OCI-LY7 (cell line): ENCODE measurements at regions of chr11 and their contacts with region 1.

Region 1: GRCh38 chr11:108008656-108009496 is at the start of gene CUL5:
- DNase-seq: peak; percentile 93
- H3K4me3 ChIP-seq: peak within 1 kb of the TSS; percentile 98
- H3K27ac ChIP-seq: peak within 1 kb of the TSS; percentile 80
- H3K4me1 ChIP-seq: peaks cover 26% of the 10 kb centered on the region
- CTCF ChIP-seq: peak; percentile 86
- total RNA-seq, gene CUL5: 18.8 and 20.1 TPM in 2 replicates

Region 2: DNA sequence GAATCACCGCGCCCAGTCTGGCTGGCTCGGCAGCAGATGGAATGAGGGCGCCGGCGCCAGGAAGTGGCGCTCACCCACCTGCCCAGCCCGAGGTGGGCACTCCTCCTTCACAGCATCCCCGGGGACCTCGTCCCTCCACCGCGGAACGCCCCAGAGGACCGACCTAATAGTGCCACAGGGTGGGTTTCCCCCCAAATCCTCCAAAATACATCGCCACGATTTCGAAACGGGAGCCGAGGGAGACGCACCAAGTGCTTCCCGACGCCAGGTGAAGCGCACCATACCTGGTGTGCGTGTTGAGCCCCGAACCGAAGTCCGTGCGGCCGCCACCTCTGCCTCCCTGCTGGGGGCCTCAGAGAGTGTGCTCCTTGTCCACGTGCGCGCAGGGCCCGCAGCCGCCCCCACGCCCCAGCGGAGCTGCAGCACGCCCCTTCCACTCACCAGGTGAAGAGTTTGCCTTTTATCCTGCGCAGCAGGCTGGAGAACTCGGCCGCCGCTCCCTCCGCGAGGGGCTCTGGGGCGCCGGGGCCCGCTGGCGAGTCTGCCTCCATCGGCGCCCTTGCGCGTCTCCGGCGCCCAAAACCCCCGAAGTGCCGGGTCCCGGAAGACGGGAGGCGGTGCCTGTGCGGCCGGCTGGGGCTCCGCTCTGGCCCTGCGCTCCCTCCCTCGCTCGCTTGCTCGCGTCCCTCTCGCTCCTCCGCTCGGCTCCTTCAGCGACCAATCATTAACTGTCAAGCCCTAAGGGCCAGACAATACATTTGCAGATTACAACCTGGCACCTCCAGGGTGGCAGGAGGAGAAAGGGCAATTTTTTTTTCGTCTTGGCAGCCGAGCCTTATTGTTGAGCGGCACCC is 150.4 kb before region 1 on chr11 and contains the start of gene SLC35F2:
- CTCF ChIA-PET with region 1: no interaction called
- POLR2A ChIA-PET with region 1: no interaction called
- intact Hi-C with region 1: loop called (anchors 10 kb)
- DNase-seq: peak; percentile 91
- H3K4me3 ChIP-seq: peak within 1 kb of the TSS; percentile 85
- H3K27ac ChIP-seq: peak within 1 kb of the TSS; percentile 62
- H3K4me1 ChIP-seq: peaks cover 18% of the 10 kb centered on the region
- CTCF ChIP-seq: peak; percentile 54
- total RNA-seq, gene SLC35F2: 20.9 and 23.3 TPM in 2 replicates

Region 3: DNA sequence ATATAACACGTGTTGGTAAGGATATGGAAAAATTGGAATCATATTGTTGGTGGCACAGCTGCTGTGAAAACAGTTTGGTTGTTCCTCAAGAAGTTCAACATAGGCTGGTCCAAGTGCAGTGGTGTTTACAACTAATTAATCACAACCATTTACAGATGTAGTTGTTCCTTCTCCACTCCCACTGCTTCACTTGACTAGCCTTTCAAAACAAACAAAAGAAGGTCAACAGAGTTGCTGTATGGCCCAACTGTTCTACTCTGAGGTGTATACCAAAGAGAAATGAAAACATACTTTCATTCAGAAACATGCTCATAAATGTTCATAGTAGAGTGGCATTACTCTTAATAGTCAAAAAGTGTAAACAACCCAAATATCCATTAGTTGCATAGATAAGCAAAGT is 75.9 kb after region 1 on chr11:
- CTCF ChIA-PET with region 1: no interaction called
- POLR2A ChIA-PET with region 1: interaction called, 3 read pairs
- intact Hi-C with region 1: loop called (anchors 5 kb)
- DNase-seq: no peak
- H3K4me3 ChIP-seq: no peak overlapping the region
- H3K27ac ChIP-seq: no peak overlapping the region
- H3K4me1 ChIP-seq: no peaks in the 10 kb centered on the region
- CTCF ChIP-seq: no peak

Region 4: DNA sequence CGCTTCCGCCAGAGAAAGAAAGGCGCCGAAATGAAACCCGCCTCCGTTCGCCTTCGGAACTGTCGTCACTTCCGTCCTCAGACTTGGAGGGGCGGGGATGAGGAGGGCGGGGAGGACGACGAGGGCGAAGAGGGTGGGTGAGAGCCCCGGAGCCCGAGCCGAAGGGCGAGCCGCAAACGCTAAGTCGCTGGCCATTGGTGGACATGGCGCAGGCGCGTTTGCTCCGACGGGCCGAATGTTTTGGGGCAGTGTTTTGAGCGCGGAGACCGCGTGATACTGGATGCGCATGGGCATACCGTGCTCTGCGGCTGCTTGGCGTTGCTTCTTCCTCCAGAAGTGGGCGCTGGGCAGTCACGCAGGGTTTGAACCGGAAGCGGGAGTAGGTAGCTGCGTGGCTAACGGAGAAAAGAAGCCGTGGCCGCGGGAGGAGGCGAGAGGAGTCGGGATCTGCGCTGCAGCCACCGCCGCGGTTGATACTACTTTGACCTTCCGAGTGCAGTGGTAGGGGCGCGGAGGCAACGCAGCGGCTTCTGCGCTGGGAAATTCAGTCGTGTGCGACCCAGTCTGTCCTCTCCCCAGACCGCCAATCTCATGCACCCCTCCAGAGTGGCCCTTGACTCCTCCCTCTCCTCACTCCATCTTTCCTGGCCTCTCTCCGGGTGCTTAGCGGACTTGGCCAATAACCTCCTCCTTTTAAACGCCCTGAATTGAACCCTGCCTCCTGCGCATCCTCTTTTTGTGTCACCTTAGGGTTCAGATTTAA is 214.0 kb after region 1 on chr11 and contains the start of gene ATM:
- CTCF ChIA-PET with region 1: no interaction called
- POLR2A ChIA-PET with region 1: no interaction called
- intact Hi-C with region 1: loop called (anchors 5 kb)
- DNase-seq: peak; percentile 98
- H3K4me3 ChIP-seq: peak within 1 kb of the TSS; percentile 93
- H3K27ac ChIP-seq: peak within 1 kb of the TSS; percentile 90
- H3K4me1 ChIP-seq: peaks cover 40% of the 10 kb centered on the region
- CTCF ChIP-seq: peak; percentile 79
- total RNA-seq, gene ATM: 125 and 147 TPM in 2 replicates

Region 5: DNA sequence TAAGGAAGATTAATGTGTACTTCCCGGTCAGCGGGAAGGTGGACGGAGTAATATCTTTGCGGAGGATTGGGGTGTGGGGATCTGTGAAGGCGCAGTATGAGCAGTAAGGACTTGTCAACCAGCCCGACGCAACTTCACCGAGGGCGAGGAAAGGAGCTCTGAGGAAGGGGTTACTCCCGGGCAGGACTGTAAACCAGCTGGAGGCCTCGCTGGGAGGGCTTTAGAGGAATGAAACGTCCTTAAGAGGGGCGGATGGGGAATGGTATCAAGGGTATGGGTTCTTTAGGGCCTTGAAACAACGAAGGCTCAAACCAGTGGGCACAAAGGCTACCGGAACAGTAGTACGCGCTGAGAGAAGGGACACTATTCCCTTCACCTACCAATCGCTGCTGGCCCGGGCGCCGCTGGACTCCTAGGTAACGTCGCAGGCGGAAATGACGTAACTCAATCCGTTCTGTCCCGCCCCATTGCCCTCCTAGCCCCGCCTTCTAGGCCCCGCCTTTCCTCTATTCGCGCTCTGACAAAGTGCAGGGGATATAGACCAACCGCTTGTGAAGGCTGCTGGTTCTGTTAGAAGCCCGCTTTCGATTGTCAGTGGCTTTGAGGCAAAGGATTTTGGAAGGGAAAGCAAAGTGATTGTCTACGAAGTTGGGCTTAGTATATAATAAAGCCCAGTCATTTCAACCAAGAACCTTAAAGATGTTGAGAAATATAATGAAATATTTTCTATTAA is 458.4 kb after region 1 on chr11 and contains the start of gene C11orf65:
- CTCF ChIA-PET with region 1: no interaction called
- POLR2A ChIA-PET with region 1: no interaction called
- intact Hi-C with region 1: loop called (anchors 10 kb)
- DNase-seq: peak; percentile 95
- H3K4me3 ChIP-seq: peak within 1 kb of the TSS; percentile 89
- H3K27ac ChIP-seq: peak within 1 kb of the TSS; percentile 35
- H3K4me1 ChIP-seq: peaks cover 11% of the 10 kb centered on the region
- CTCF ChIP-seq: no peak
- total RNA-seq, gene C11orf65: 0.15 and 0.98 TPM in 2 replicates

Region 6: DNA sequence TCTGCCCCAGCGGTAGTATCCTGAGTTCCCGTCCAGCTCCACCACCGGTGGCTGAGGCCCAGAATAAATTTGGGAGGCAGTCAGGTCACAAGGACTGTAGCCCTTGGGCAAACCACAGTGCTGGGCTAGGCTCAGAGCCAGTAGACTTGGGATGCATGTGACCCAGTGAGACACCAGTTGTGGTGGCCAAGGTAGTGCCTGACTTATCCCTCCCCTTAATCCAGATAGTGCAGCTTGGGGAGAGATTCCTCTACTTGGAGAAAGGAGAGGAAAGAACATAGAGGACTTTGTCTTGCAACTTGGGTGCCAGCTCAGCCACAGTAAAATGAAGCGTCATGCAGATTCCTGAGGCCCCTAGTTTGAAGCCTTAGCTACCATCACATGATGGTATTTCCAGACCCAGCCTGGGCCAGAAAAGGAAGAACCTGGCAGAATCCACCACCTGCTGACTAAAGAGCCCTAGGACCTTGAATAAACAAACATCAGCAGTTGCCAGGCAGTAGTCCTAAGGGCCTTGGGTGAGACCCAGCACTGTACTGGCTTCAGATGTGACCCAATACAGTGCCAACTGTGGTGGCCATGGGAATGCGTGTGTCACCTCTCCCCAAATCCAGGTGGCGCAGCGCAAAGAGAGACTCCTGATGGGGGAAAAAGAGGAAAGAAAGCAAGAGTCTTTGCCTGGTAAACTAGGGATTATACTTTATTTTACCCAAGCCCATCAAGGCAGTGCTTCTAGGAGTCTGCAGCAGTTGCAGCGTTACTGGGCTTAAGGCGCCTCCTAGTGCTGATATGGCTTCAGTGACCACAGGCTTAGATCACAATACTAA is 639.0 kb after region 1 on chr11:
- CTCF ChIA-PET with region 1: no interaction called
- POLR2A ChIA-PET with region 1: no interaction called
- intact Hi-C with region 1: loop called (anchors 5 kb)
- DNase-seq: peak; percentile 67
- H3K4me3 ChIP-seq: no peak overlapping the region
- H3K27ac ChIP-seq: no peak overlapping the region
- H3K4me1 ChIP-seq: no peaks in the 10 kb centered on the region
- CTCF ChIP-seq: peak; percentile 84

Region 7: GRCh38 chr11:108664730-108665525 is 656.1 kb after region 1 on chr11 and contains the start of gene DDX10:
- CTCF ChIA-PET with region 1: no interaction called
- POLR2A ChIA-PET with region 1: no interaction called
- intact Hi-C with region 1: loop called (anchors 5 kb)
- DNase-seq: peak; percentile 98
- H3K4me3 ChIP-seq: peak within 1 kb of the TSS; percentile 95
- H3K27ac ChIP-seq: peak within 1 kb of the TSS; percentile 88
- H3K4me1 ChIP-seq: peaks cover 67% of the 10 kb centered on the region
- CTCF ChIP-seq: peak; percentile 23; the same call in 1 of the 2 replicates
- total RNA-seq, gene DDX10: 38.0 and 46.5 TPM in 2 replicates